ENCODE measurements at regions of chr17 and their contacts with region 1.

Region 1: GRCh38 chr17:82494236-82495055 is 25.1 kb upstream of the FOXK2 start:
- DNase-seq: peak; percentile 96
- H3K4me3 Mint-ChIP-seq: peak overlapping the region; percentile 39
- H3K27ac Mint-ChIP-seq: peak overlapping the region; percentile 93
- H3K4me1 Mint-ChIP-seq: peaks cover 20% of the 10 kb centered on the region
- H3K27me3 Mint-ChIP-seq: no peaks in the 10 kb centered on the region

Region 2: DNA sequence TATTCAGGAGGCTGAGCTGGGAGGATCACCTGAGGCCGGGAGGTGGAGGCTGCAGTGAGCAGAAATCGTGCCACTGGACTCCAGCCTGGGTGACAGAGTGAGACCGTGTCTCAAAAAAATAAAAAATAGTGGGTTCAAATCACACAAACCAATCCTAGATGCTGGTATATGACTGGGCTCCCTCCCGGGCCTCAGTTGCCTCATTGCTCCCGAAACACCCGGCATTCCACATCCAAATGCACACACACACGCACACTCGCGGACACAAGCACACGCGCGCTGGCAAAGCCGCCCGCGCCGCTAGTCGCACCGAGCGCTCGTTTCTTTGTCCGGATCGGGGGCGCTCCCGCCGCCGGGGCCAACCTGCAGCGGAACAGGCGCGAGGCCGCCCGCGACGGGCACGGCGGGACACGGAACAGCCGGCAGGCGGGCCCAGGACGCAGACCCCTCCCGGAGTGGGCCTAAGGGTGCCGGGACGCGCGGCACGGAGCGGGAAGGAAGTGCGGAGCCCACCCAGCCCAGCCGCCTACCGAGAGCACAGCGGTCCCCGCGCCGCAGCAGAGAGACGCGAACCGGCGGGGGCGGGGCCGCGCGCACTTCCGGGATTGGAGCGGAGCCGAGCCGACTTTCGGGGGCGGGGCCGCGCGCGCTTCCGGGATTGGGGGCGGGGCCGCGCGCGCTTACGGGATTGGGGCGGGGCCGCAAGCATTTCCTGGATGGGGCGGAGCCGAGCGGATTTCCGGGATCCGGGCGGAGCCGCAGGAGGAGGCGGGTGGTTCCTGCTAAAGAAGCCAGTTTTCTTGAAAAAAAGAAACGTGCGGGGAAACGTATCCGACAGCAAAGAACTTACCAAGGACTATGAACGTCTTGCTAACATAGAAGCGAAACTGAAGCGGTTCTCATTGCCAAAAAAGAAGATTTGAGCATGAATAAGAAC is 44.0 kb before region 1 on chr17 and contains the start of gene CYBC1:
- intact Hi-C with region 1: loop called (anchors 1 kb)
- DNase-seq: peak; percentile 98
- H3K4me3 Mint-ChIP-seq: peak within 1 kb of the TSS; percentile 89
- H3K27ac Mint-ChIP-seq: peak within 1 kb of the TSS; percentile 95
- H3K4me1 Mint-ChIP-seq: peaks cover 20% of the 10 kb centered on the region
- H3K27me3 Mint-ChIP-seq: no peaks in the 10 kb centered on the region
- total RNA-seq, gene CYBC1: 256 and 268 TPM in 2 replicates

Region 3: GRCh38 chr17:82518826-82519810 is 24.7 kb after region 1 on chr17 and contains the start of gene FOXK2:
- intact Hi-C with region 1: loop called (anchors 1 kb)
- DNase-seq: peak; percentile 99
- H3K4me3 Mint-ChIP-seq: peak within 1 kb of the TSS; percentile 86
- H3K27ac Mint-ChIP-seq: peak within 1 kb of the TSS; percentile 86
- H3K4me1 Mint-ChIP-seq: peaks cover 20% of the 10 kb centered on the region
- H3K27me3 Mint-ChIP-seq: no peaks in the 10 kb centered on the region
- total RNA-seq, gene FOXK2: 92.6 and 97.4 TPM in 2 replicates